ENCODE measurements at regions of chr10 and their contacts with region 1.

Region 1: DNA sequence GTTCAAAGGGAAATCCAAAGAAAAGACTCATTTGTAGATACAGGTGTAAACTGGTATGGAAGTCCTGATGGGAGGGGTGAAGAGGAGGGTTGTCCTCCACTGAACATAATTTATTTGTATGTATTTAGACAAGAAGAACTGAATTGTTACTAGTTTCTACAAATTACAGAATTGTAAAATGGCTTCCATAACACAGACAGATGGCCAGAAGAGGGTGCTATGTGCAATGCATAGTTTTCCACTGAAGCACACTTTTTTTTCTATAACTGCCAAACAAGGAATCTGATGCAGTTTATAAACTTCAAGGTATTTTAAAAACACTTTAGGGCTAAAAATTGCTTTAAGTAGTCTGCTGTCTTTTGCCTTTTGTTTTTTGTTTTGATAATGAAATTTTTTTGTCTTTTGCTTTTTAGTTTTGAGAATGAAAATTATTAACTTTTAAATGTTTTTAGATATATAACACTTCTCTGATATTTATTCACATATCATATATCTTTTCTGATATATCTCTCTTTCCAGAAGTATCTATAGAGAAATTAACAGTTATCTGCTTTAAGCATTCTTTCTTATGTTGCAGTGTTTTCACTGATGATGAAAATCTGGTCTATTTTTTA is 58.5 kb downstream of the PHYHIPL start:
- DNase-seq: peak; percentile 44
- ATAC-seq: peak; percentile 66
- H3K4me3 ChIP-seq: no peak overlapping the region
- H3K27ac ChIP-seq: no peak overlapping the region
- H3K4me1 ChIP-seq: no peaks in the 10 kb centered on the region; a peak in 1 of 4 replicates
- H3K27me3 ChIP-seq: no peaks in the 10 kb centered on the region
- CTCF ChIP-seq: peak; percentile 37 to 75 (median 70); a peak in 5 of 6 replicates
- POLR2A ChIP-seq: no peak
- RAD21 ChIP-seq: peak; percentile 52

Region 2: GRCh38 chr10:59315465-59315864 is 80.5 kb after region 1 on chr10:
- CTCF ChIA-PET with region 1: no interaction called
- POLR2A ChIA-PET with region 1: no interaction called
- RAD21 ChIA-PET with region 1: no interaction called
- intact Hi-C with region 1: no loop called
- DNase-seq: no peak
- ATAC-seq: no peak
- H3K4me3 ChIP-seq: no peak overlapping the region
- H3K27ac ChIP-seq: no peak overlapping the region
- H3K4me1 ChIP-seq: no peaks in the 10 kb centered on the region
- H3K27me3 ChIP-seq: peaks cover 2% of the 10 kb centered on the region; the same call in 1 of the 2 replicates
- CTCF ChIP-seq: no peak
- POLR2A ChIP-seq: no peak
- RAD21 ChIP-seq: no peak

Region 3: DNA sequence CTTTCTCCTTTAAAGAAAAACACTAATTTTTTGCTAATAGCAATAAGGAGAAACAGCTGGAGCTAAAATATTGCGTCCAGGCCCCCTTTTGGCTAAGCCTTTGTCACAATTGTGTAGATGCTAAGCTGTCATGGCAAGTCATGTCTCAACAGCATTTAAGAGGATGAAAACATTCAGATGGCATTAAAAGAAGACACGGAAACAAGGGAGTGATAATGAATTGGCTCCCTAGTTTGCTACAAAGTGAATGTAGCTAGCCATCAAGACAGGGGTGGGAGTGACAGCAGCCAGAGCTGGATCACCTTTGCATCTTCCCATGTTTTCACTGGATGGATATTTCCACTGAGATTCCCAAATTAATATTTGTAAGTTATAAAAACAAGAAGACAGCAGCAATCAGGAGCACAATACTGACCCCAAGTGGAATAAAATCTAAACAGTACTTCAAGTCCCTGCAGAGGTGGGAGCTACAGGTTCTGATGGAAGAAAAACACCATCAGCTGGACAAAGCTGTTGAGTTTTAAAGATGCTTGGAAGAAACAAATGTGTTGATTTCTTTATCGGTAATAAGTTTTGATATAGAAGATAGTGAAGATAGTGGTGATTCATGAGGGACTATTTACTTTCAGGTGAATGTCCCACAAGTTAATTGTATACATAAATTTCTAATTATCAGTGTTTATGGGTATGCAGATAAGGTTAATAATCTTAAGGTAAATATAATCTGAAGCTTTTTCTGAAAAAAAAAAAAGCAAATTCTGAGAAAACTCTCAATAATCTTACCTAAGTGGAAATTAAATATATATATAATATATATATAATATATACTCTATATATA is 345.3 kb after region 1 on chr10:
- CTCF ChIA-PET with region 1: interaction called, 13 read pairs
- POLR2A ChIA-PET with region 1: no interaction called
- RAD21 ChIA-PET with region 1: no interaction called
- intact Hi-C with region 1: loop called (anchors 1 kb)
- DNase-seq: peak; percentile 32
- ATAC-seq: peak; percentile 67
- H3K4me3 ChIP-seq: no peak overlapping the region
- H3K27ac ChIP-seq: no peak overlapping the region
- H3K4me1 ChIP-seq: no peaks in the 10 kb centered on the region
- H3K27me3 ChIP-seq: peaks cover 17% of the 10 kb centered on the region; the same call in 1 of the 2 replicates
- CTCF ChIP-seq: peak; percentile 35 to 61 (median 41); a peak in 4 of 6 replicates
- POLR2A ChIP-seq: no peak
- RAD21 ChIP-seq: peak; percentile 66